Endothelial cell of umbilical vein (primary cell): ENCODE measurements at regions of chr6 and their contacts with region 1.

Region 1: DNA sequence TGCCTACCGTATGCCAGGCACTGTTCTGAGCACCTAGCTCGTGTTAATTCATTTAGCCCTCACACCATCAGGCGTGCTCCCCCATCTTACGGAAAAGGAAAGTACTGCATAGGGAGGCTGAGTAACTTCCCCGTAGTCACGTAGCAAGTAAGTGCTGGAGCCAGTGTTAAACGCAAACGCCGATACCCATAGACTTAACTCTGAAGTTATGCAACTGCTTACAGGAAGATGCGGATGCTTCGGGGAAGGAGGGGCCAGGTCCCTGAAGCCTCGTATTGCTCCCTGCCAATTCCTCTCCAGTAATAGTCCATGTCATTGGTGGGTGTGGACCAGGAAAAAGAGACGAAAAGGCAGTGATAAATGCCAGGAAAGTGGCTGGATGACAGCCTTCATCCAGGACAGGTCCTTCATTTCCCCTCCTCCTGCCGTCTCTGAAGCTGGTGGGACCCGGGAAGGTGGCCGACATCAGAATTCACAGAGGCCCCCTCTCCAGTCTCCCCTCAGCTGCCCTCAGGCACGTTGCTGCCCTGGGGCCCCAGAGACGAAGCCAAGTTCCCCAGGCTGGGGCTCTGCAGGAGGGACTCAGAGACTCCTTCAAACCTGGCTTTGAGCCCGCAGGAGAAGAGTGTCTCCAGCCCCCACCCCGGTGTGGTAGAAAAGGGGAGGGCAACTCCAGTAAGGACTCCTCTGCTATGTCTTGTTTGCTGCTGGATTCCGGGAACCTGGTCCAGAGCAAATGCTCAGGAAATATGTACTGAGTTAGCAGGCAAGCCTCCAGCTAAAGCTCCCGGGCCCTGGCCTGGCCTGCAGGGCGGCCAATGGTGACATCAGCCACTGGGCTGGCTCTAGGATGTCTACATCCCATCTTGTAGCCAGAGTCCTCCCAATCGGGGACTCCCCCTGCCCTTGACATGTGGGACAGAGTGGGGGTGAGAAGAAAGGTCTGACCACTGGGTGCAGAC is 37.8 kb downstream of the RAB44 start:
- DNase-seq: peak; percentile 68
- H3K4me3 ChIP-seq: no peak overlapping the region
- H3K27ac ChIP-seq: no peak overlapping the region
- H3K4me1 ChIP-seq: peaks cover 31% of the 10 kb centered on the region
- H3K27me3 ChIP-seq: no peaks in the 10 kb centered on the region
- CTCF ChIP-seq: peak in 1 of 2 donors; percentile 27
- POLR2A ChIP-seq: no peak

Region 2: GRCh38 chr6:36615018-36615761 is 120.2 kb before region 1 on chr6:
- CTCF ChIA-PET with region 1: interaction called, 13 read pairs
- POLR2A ChIA-PET with region 1: no interaction called
- dilution Hi-C with region 1: no loop called
- intact Hi-C with region 1: no loop called
- DNase-seq: peak; percentile 85
- H3K4me3 ChIP-seq: no peak overlapping the region
- H3K27ac ChIP-seq: no peak overlapping the region
- H3K4me1 ChIP-seq: peaks cover 17% of the 10 kb centered on the region
- H3K27me3 ChIP-seq: no peaks in the 10 kb centered on the region
- CTCF ChIP-seq: peak; percentile 65 to 74
- POLR2A ChIP-seq: no peak

Region 3: DNA sequence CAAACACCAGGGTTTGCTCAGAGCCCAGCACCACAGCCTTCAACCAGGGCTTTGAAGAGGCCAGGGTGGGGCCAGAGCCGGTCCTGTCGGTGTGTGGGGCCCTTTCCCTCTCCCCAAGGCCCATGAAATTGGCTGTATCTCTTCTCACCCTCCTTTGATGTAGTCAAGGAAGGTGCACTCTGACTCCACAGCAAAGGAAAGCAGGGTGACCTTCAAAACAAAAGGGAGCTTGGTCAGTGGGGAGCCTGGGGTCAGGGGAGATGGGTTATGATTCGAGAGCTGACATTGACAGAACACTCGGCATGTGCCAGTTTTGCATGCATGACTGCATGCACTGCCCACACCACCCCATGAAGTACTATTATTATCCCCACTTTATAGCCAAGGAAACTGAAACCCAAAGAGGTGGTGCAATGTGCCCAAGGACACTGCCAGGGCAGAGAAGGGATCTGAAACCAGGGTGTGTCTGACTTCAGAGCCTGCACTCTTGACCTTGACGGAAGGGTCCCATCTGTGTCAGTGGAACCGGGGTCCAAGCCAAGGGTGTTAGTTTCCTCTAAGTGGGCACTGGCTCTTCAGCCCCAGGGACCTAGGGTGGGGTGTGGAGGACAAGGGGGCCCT is 17.6 kb after region 1 on chr6:
- CTCF ChIA-PET with region 1: interaction called, 6 read pairs
- POLR2A ChIA-PET with region 1: interaction called, 3 read pairs
- dilution Hi-C with region 1: no loop called
- intact Hi-C with region 1: loop called (anchors 1 kb)
- DNase-seq: no peak
- H3K4me3 ChIP-seq: no peak overlapping the region
- H3K27ac ChIP-seq: peak overlapping the region; percentile 25
- H3K4me1 ChIP-seq: peaks cover 52% of the 10 kb centered on the region
- H3K27me3 ChIP-seq: no peaks in the 10 kb centered on the region
- CTCF ChIP-seq: no peak
- POLR2A ChIP-seq: no peak

Region 4: GRCh38 chr6:36772397-36772796 is 37.0 kb after region 1 on chr6:
- CTCF ChIA-PET with region 1: no interaction called
- POLR2A ChIA-PET with region 1: no interaction called
- dilution Hi-C with region 1: no loop called
- intact Hi-C with region 1: no loop called
- DNase-seq: no peak
- H3K4me3 ChIP-seq: no peak overlapping the region
- H3K27ac ChIP-seq: no peak overlapping the region
- H3K4me1 ChIP-seq: peaks cover 19% of the 10 kb centered on the region
- H3K27me3 ChIP-seq: no peaks in the 10 kb centered on the region
- CTCF ChIP-seq: no peak
- POLR2A ChIP-seq: no peak

Region 5: GRCh38 chr6:37777272-37777834 is 1042.0 kb after region 1 on chr6:
- CTCF ChIA-PET with region 1: no interaction called
- POLR2A ChIA-PET with region 1: no interaction called
- dilution Hi-C with region 1: no loop called
- intact Hi-C with region 1: no loop called
- DNase-seq: no peak
- H3K4me3 ChIP-seq: no peak overlapping the region
- H3K27ac ChIP-seq: no peak overlapping the region
- H3K4me1 ChIP-seq: no peaks in the 10 kb centered on the region
- H3K27me3 ChIP-seq: peaks cover 11 to 12% of the 10 kb centered on the region in 2 experiments
- CTCF ChIP-seq: no peak
- POLR2A ChIP-seq: no peak